Esophagus squamous epithelium (tissue), 5 donors: ENCODE measurements at regions of chr14 and their contacts with region 1.

Region 1: DNA sequence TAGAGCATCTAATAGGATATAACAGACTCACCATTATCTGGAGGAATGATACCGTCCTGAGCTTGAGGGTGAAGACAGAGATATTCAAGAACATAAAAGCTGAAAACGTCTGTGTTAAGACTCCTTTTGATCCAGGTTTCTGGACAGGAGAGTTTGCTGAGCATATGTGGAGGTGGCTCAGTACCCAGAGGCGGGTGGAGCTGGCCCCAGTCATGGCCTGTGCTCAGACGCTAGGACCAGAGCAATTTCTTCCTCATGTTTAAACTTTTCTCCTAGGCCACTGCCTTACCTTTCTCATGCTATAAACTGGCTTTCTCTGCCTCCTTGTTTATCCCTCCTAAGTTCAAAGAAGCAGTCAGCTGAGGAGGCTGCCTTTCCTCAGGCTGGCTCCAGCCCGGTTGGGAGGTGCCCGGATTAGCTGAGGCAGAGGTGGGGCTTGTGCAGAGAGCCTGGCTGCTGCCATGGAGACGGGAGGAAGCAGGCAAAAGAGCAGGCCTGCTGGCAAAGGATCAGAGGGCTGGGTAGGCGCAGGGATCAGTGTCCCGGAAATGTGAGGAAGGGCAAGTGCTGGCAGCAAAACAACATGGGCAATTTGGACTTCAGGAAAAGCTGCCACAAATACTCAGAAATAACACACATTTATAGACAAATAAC is 13.7 kb downstream of the COA8 start:
- DNase-seq: no peak
- H3K4me3 ChIP-seq: peak overlapping the region in 1 of 4 donors; percentile 4
- H3K27ac ChIP-seq: peak overlapping the region; percentile 77 to 88 (median 86)
- H3K4me1 ChIP-seq: peaks cover 29 to 65% (median 39%) of the 10 kb centered on the region in 3 donors
- H3K27me3 ChIP-seq: no peaks in the 10 kb centered on the region
- CTCF ChIP-seq: no peak
- POLR2A ChIP-seq: peak in 1 of 4 donors; percentile 19

Region 2: GRCh38 chr14:102683399-102684297 is 892.9 kb before region 1 on chr14:
- intact Hi-C with region 1: no loop called
- DNase-seq: no peak
- H3K4me3 ChIP-seq: no peak overlapping the region
- H3K27ac ChIP-seq: no peak overlapping the region
- H3K4me1 ChIP-seq: peaks cover 0 to 8% (median 0%) of the 10 kb centered on the region in 3 donors
- H3K27me3 ChIP-seq: no peaks in the 10 kb centered on the region
- CTCF ChIP-seq: no peak
- POLR2A ChIP-seq: no peak

Region 3: DNA sequence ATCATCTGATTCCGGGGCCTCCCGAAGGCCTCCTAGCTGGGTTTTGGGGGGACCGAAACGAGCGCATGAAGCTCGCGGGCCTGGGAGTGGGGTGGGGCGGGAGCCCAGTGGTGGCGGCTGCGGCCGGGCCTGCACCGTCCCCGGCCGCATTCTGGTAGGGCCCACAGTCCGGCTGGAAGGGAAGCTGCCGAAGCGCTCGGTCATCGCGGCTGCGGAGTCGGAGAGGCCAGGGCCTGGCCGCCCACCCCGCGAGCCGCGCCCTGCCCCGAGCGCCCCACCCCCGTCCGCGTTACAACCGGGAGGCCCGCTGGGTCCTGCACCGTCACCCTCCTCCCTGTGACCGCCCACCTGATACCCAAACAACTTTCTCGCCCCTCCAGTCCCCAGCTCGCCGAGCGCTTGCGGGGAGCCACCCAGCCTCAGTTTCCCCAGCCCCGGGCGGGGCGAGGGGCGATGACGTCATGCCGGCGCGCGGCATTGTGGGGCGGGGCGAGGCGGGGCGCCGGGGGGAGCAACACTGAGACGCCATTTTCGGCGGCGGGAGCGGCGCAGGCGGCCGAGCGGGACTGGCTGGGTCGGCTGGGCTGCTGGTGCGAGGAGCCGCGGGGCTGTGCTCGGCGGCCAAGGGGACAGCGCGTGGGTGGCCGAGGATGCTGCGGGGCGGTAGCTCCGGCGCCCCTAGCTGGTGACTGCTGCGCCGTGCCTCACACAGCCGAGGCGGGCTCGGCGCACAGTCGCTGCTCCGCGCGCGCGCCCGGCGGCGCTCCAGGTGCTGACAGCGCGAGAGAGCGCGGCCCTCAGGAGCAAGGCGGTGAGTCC is 52.4 kb after region 1 on chr14 and contains the start of gene KLC1:
- intact Hi-C with region 1: loop called (anchors 10 kb)
- DNase-seq: no peak
- H3K4me3 ChIP-seq: peak within 1 kb of the TSS; percentile 89 to 100 (median 90)
- H3K27ac ChIP-seq: peak within 1 kb of the TSS; percentile 98 to 100 (median 98)
- H3K4me1 ChIP-seq: peaks cover 37 to 85% (median 55%) of the 10 kb centered on the region in 3 donors
- H3K27me3 ChIP-seq: no peaks in the 10 kb centered on the region
- CTCF ChIP-seq: no peak
- POLR2A ChIP-seq: peak in 3 of 4 donors; percentile 70 to 96 (median 91)
- total RNA-seq, gene KLC1: 101 to 285 (median 194) TPM

Region 4: GRCh38 chr14:103696466-103697071 is 120.1 kb after region 1 on chr14:
- intact Hi-C with region 1: loop called (anchors 10 kb)
- DNase-seq: no peak
- H3K4me3 ChIP-seq: no peak overlapping the region
- H3K27ac ChIP-seq: peak overlapping the region in 3 of 4 donors; percentile 68 to 84 (median 73)
- H3K4me1 ChIP-seq: peaks cover 39 to 97% (median 53%) of the 10 kb centered on the region in 3 donors
- H3K27me3 ChIP-seq: no peaks in the 10 kb centered on the region
- CTCF ChIP-seq: no peak
- POLR2A ChIP-seq: no peak